PC-9 (cell line): ENCODE measurements at regions of chr18 and their contacts with region 1.

Region 1: DNA sequence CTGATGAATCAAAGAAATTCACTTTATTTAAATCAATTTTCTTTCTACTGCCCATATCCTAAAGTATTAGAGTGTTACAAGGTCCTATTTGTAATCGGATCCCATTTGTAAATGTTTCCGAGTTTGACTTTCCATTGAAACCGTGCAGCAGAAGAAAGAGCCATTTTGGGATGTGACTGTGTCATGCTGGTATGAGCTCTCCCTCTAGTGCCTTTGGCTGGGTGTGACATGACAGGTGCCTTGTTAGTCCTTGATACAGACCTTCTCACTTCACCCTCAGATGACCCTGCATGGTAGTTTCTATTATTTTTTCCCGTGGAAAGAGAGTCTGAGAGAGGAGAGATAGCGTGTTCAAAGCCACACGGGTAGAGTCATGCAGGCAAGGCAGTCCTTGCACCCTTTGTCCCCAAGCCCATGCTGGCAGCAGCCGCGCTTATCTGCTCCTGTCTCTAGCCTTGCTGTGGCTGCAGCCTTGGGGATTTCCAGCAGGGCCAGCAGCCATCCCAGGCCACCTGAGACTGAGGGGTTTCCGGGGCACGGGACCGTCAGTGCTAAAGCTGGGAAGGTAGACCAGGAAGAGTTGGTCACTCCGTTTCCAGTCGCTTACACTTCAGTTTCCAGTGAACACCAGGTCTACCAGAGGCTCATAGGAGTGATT is 21.4 kb downstream of the CHMP1B start:
- DNase-seq: peak in 1 of 2 experiments; percentile 41
- H3K4me3 ChIP-seq: no peak overlapping the region
- H3K27ac ChIP-seq: no peak overlapping the region
- H3K4me1 ChIP-seq: no peaks in the 10 kb centered on the region
- H3K27me3 ChIP-seq: no peaks in the 10 kb centered on the region
- CTCF ChIP-seq: peak; percentile 75

Region 2: DNA sequence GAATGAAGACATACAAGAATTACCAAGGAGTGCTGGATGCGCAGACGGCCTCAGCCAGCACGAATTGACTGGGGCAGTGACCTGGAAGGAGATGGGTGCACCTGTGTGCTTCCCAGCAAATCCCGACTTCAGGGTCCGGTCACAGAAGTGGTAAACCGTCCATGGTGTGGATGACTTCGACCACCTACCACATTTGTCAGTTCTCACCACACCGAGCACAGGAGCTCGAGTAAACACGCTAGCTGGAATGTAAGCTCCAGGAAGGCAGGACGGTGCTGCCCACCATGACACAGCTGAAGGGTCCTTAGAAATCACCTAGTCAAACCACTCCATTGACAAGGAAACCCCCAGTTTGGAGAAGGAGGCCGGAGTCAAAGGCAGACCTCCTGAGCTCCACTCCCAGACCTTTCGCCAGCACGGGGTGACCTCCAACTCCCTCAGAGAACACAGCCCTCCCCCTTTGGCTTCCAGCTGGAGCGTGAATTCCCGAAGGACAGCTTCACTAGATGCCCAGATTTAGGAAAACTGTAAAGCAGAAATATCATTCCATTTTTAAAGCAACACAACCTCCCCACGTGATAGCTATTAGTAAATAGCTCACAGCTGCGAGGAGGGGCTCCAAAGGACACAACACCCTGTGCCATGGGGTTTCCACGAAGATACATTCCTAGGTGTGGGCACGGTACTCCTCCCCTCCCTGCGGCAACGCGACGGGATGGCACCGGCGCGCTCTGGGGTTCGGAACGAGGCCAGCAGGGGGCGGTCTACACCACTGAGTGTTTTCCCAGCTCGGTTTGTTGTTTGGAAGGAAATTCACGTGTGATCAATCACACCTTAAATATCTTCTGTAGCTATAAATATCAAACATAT is 217.6 kb before region 1 on chr18:
- CTCF ChIA-PET with region 1: no interaction called
- POLR2A ChIA-PET with region 1: no interaction called
- intact Hi-C with region 1: loop called (anchors 1 kb)
- DNase-seq: peak in 1 of 2 experiments; percentile 49
- H3K4me3 ChIP-seq: no peak overlapping the region
- H3K27ac ChIP-seq: no peak overlapping the region
- H3K4me1 ChIP-seq: no peaks in the 10 kb centered on the region
- H3K27me3 ChIP-seq: peaks cover 87% of the 10 kb centered on the region
- CTCF ChIP-seq: peak; percentile 73

Region 3: GRCh38 chr18:11840493-11840892 is 32.1 kb before region 1 on chr18:
- CTCF ChIA-PET with region 1: no interaction called
- POLR2A ChIA-PET with region 1: no interaction called
- intact Hi-C with region 1: no loop called
- DNase-seq: no peak
- H3K4me3 ChIP-seq: no peak overlapping the region
- H3K27ac ChIP-seq: no peak overlapping the region
- H3K4me1 ChIP-seq: no peaks in the 10 kb centered on the region
- H3K27me3 ChIP-seq: no peaks in the 10 kb centered on the region
- CTCF ChIP-seq: no peak

Region 4: DNA sequence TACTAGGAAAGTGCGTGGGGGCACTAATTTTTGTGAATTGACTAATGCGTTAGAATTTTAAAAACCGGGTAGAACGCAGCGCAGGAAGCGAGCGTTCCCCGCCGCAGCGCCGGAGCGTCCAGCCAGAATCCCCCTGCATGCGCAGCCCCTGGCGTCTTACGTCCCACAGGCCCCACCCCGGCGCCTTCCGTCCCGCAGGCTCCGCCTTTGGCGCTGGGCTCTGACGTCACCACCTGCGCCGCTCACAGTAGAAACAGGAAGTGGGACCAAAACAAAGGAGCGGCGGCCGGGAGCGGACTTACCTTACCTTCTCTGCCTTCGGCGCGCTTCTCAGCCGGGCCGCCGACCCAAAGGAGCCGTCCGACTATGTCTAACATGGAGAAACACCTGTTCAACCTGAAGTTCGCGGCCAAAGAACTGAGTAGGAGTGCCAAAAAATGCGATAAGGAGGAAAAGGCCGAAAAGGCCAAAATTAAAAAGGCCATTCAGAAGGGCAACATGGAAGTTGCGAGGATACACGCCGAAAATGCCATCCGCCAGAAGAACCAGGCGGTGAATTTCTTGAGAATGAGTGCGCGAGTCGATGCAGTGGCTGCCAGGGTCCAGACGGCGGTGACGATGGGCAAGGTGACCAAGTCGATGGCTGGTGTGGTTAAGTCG is 21.3 kb before region 1 on chr18 and contains the start of gene CHMP1B:
- CTCF ChIA-PET with region 1: no interaction called
- POLR2A ChIA-PET with region 1: interaction called, 11 read pairs
- intact Hi-C with region 1: loop called (anchors 1 kb)
- DNase-seq: peak; percentile 89 to 97
- H3K4me3 ChIP-seq: peak within 1 kb of the TSS; percentile 98
- H3K27ac ChIP-seq: peak within 1 kb of the TSS; percentile 83
- H3K4me1 ChIP-seq: peaks cover 39% of the 10 kb centered on the region
- H3K27me3 ChIP-seq: no peaks in the 10 kb centered on the region
- CTCF ChIP-seq: no peak
- total RNA-seq, gene CHMP1B: 68.0 and 73.6 TPM in 2 replicates

Region 5: DNA sequence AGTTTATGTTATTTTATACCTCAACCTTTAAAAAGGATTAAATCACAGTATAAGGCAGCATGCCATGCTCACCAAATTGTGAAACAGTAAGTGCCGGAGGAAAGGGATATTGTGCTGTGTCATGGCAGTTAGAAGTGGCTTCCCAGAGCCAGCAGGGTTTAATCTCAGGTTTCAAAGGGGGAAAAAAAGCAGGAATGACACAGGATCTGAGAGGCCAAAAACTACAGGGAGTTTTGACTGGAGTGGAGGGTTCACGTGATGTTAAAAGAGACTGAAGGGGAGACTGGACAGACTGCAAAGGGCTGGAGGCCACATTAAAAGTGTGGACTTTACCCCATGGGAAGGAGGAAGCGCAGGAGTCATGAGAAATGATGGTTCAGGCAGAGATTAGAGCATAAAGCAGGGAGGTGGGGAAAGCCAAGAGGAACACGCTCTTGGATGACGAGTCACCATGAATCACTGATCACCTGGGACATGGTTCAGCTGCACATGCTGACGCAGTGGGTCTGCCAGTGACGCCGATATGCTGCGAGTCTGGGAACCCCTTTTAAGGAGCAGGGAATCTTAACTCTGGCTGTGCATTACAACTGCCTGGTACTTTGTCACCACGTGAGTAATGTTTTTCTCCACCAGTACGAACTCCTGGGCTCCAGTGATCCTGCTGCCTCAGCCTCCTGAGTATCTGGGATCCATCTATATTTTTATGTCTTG is 15.3 kb before region 1 on chr18:
- CTCF ChIA-PET with region 1: no interaction called
- POLR2A ChIA-PET with region 1: interaction called, 7 read pairs
- intact Hi-C with region 1: loop called (anchors 1 kb)
- DNase-seq: peak; percentile 87 to 97
- H3K4me3 ChIP-seq: peak overlapping the region; percentile 43; the same call in 1 of the 2 replicates
- H3K27ac ChIP-seq: peak overlapping the region; percentile 97
- H3K4me1 ChIP-seq: peaks cover 62% of the 10 kb centered on the region
- H3K27me3 ChIP-seq: no peaks in the 10 kb centered on the region
- CTCF ChIP-seq: no peak